CD8-positive, alpha-beta T cell (primary cell): ENCODE measurements at regions of chr11 and their contacts with region 1.

Region 1: DNA sequence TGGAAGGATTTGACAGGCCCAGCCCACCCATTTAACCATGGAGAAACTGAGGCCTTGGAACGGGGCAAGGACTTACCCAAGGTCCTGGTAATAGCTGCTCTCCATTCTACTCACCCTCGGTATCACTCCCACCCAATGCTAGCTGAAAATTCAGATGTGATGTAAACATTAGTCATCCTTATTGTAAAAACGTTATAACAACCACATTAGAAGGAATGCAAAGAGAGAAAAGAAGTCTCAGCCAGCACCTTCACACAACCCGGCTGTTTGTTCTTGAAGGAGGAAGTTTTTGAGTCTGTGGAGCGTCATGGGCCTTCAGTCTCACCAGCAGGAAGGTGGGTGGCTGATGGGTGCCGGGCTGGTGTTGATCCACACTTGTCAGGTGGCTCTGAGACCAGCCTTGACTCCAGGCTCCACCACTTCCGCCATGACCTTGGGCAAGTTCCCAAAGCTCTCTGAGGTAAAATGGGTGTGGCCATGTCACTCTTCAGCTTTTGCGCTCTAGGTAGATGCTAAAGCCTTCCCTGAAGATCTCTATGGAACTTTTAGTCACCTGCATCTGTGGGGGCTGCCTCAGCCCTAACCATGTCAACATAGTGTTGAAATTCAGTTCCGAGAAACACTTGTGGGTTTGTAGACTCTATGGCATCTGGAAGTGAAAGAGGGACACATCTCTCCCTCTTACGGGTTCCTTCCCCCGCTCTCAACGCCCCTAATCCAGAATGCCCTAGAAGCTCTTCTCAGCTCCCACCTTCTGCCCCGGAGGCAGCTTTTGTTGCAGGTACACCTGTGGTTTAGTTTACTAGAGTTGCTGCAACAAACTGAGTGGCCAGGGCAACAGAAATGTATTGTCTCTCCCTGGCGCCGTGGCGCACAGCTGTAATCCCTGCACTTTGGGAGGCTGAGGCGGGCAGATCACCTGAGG is 14.8 kb downstream of the CD6 start:
- DNase-seq: peak; percentile 81 to 99 (median 92)
- ATAC-seq: peak; percentile 86
- H3K4me3 ChIP-seq: peak overlapping the region; percentile 7 to 17
- H3K4me3 Mint-ChIP-seq: peak overlapping the region; percentile 68
- H3K27ac ChIP-seq: peak overlapping the region; percentile 72 to 86
- H3K27ac Mint-ChIP-seq: peak overlapping the region; percentile 96
- H3K4me1 ChIP-seq: peaks cover 83% of the 10 kb centered on the region
- H3K4me1 Mint-ChIP-seq: peaks cover 90% of the 10 kb centered on the region
- H3K27me3 ChIP-seq: no peaks in the 10 kb centered on the region
- H3K27me3 Mint-ChIP-seq: no peaks in the 10 kb centered on the region
- CTCF ChIP-seq: no peak

Region 2: DNA sequence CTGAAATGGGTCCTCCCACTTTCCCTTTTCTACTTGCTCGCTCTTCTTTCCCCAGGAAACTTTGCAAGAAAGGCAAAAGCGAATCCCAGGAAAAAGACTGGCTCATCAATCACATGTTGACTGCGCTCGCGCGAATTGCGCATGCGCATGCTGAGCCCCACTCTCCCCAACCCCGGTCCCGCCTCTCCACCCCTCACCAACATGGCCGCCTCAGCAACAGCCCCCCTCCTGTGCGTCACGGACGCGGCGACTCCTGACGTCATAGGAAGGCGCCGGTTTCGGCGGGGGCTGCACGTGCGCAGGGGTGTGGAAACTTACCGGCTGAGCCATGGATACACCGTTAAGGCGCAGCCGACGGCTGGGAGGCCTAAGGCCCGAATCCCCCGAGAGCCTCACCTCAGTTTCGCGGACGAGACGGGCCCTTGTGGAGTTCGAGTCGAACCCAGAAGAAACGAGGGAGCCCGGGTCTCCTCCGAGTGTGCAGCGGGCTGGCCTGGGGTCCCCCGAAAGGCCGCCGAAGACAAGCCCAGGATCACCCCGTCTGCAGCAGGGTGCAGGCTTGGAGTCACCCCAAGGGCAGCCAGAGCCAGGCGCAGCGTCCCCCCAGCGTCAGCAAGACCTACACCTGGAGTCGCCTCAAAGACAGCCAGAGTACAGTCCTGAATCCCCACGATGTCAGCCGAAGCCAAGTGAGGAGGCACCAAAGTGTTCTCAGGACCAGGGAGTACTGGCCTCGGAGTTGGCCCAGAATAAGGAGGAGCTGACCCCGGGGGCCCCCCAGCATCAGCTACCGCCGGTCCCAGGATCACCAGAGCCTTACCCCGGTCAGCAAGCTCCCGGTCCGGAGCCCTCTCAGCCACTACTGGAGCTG is 144.2 kb before region 1 on chr11 and contains the start of gene CCDC86:
- CTCF ChIA-PET with region 1: no interaction called
- POLR2A ChIA-PET with region 1: no interaction called
- intact Hi-C with region 1: loop called in 1 of 2 experiments (anchors 5 kb)
- DNase-seq: peak; percentile 97 to 100 (median 98)
- ATAC-seq: peak; percentile 97
- H3K4me3 ChIP-seq: peak within 1 kb of the TSS; percentile 84 to 93
- H3K4me3 Mint-ChIP-seq: peak within 1 kb of the TSS; percentile 93
- H3K27ac ChIP-seq: peak within 1 kb of the TSS; percentile 71 to 83
- H3K27ac Mint-ChIP-seq: peak within 1 kb of the TSS; percentile 97
- H3K4me1 ChIP-seq: peaks cover 35% of the 10 kb centered on the region
- H3K4me1 Mint-ChIP-seq: peaks cover 46% of the 10 kb centered on the region
- H3K27me3 ChIP-seq: no peaks in the 10 kb centered on the region
- H3K27me3 Mint-ChIP-seq: no peaks in the 10 kb centered on the region
- CTCF ChIP-seq: no peak
- total RNA-seq, gene CCDC86: 10.8 to 11.9 TPM

Region 3: DNA sequence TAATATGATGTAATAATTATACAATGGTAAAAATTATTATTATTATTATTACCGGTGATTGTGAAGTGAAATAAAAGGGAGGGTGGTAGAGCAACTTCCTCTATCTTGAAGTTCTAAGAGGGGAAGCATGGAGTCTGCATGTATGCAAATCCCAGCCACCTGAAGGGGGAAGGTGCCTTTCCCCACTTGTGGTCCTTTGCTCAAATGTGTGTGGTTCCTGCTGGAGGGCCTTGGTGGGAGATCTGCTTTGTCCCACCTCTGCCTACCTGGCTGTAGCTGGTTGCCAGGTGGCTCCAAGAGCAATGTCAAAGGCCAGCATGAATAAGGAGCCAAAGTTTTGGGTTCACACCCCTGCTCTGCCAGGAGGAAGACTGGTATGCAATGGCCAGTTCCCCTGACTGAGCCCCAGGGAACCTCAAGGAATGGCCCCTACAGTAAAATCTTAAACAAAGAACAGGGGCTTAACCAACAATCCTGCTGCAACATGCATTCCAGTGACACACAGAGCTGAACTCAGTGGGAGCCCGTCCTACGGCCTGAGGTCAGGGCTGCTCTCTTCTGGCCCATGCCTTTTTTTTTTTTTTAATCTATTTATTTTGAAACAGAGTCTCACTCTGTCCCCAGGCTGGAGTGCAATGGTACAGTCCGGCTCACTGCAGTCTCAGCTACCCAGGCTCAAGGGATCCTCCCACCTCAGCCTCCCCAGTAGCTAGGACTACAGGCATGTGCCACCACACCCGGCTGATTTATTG is 53.5 kb before region 1 on chr11:
- CTCF ChIA-PET with region 1: no interaction called
- POLR2A ChIA-PET with region 1: no interaction called
- intact Hi-C with region 1: no loop called
- DNase-seq: no peak
- ATAC-seq: no peak
- H3K4me3 ChIP-seq: no peak overlapping the region
- H3K4me3 Mint-ChIP-seq: no peak overlapping the region
- H3K27ac ChIP-seq: no peak overlapping the region
- H3K27ac Mint-ChIP-seq: no peak overlapping the region
- H3K4me1 ChIP-seq: no peaks in the 10 kb centered on the region
- H3K4me1 Mint-ChIP-seq: no peaks in the 10 kb centered on the region
- H3K27me3 ChIP-seq: no peaks in the 10 kb centered on the region
- H3K27me3 Mint-ChIP-seq: peaks cover 3% of the 10 kb centered on the region
- CTCF ChIP-seq: no peak

Region 4: DNA sequence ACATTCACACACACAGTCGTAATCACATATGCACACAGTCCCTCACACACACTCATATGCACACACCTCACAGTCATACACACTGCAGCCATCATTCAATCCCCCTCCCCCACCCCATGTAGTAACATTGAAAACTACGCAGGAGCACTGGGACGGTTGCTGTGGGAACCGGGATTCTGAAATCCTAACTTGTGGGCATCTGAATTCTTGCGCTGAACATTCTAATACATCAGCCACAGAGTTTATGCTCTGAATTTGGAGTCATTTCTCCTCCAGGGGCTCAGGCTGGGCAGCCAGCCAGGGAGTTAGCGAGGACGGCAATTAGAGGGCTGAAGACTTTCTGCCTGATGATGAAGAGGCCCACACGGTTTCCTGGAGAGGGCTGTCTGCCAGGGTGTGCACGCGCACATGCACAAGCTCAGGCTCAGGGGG is 17.9 kb after region 1 on chr11:
- CTCF ChIA-PET with region 1: interaction called, 3 read pairs
- POLR2A ChIA-PET with region 1: interaction called, 6 read pairs
- intact Hi-C with region 1: loop called in 1 of 2 experiments (anchors 2 kb)
- DNase-seq: peak in 6 of 9 experiments; percentile 39 to 70 (median 58)
- ATAC-seq: peak; percentile 48
- H3K4me3 ChIP-seq: peak overlapping the region in 1 of 2 experiments; percentile 12
- H3K4me3 Mint-ChIP-seq: peak overlapping the region; percentile 72
- H3K27ac ChIP-seq: peak overlapping the region; percentile 22 to 62
- H3K27ac Mint-ChIP-seq: peak overlapping the region; percentile 92
- H3K4me1 ChIP-seq: peaks cover 68% of the 10 kb centered on the region
- H3K4me1 Mint-ChIP-seq: peaks cover 78% of the 10 kb centered on the region
- H3K27me3 ChIP-seq: no peaks in the 10 kb centered on the region
- H3K27me3 Mint-ChIP-seq: no peaks in the 10 kb centered on the region
- CTCF ChIP-seq: no peak

Region 5: GRCh38 chr11:61028272-61028761 is 42.1 kb after region 1 on chr11:
- CTCF ChIA-PET with region 1: interaction called, 3 read pairs
- POLR2A ChIA-PET with region 1: interaction called, 12 read pairs
- intact Hi-C with region 1: loop called (anchors 1 to 2 kb)
- DNase-seq: peak in 8 of 9 experiments; percentile 29 to 80 (median 72)
- ATAC-seq: peak; percentile 19
- H3K4me3 ChIP-seq: peak overlapping the region; percentile 21 to 38
- H3K4me3 Mint-ChIP-seq: peak overlapping the region; percentile 83
- H3K27ac ChIP-seq: peak overlapping the region; percentile 44 to 66
- H3K27ac Mint-ChIP-seq: peak overlapping the region; percentile 95
- H3K4me1 ChIP-seq: peaks cover 61% of the 10 kb centered on the region
- H3K4me1 Mint-ChIP-seq: peaks cover 66% of the 10 kb centered on the region
- H3K27me3 ChIP-seq: no peaks in the 10 kb centered on the region
- H3K27me3 Mint-ChIP-seq: no peaks in the 10 kb centered on the region
- CTCF ChIP-seq: no peak